Heart right ventricle (tissue), 16 donors: ENCODE measurements at regions of chr14 and their contacts with region 1.

Region 1: GRCh38 chr14:26394150-26394810 is 203.6 kb downstream of the NOVA1 start:
- DNase-seq: no peak
- ATAC-seq: peak in 4 of 8 donors; percentile 49 to 66 (median 56)
- H3K4me3 ChIP-seq: no peak overlapping the region
- H3K27ac ChIP-seq: no peak overlapping the region
- H3K4me1 ChIP-seq: no peaks in the 10 kb centered on the region
- H3K27me3 ChIP-seq: no peaks in the 10 kb centered on the region
- CTCF ChIP-seq: peak in 7 of 9 donors; percentile 30 to 60 (median 49)

Region 2: DNA sequence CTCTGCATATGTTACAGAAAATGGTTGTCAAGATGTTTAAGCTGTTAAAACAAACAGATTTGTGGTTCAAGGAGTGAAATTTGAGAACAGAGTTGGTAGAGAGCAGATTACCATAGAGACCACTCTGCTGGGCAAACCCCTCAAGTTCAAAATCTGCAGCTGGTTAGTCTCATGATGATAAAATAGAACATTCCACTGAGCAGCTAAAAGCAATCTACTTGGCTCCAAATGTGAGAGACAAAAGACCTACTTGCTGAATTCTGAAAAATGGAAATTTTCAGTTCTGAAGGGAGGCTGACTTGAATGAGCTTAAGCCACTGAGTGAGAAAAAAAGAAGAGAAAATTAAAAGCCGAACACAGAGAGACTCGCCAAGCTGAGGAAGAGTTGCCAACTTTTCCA is 315.7 kb before region 1 on chr14:
- intact Hi-C with region 1: no loop called
- DNase-seq: no peak
- ATAC-seq: no peak
- H3K4me3 ChIP-seq: no peak overlapping the region
- H3K27ac ChIP-seq: no peak overlapping the region
- H3K4me1 ChIP-seq: no peaks in the 10 kb centered on the region
- H3K27me3 ChIP-seq: no peaks in the 10 kb centered on the region
- CTCF ChIP-seq: no peak

Region 3: GRCh38 chr14:26454105-26454504 is 59.8 kb after region 1 on chr14:
- intact Hi-C with region 1: no loop called
- DNase-seq: no peak
- ATAC-seq: no peak
- H3K4me3 ChIP-seq: no peak overlapping the region
- H3K27ac ChIP-seq: no peak overlapping the region
- H3K4me1 ChIP-seq: no peaks in the 10 kb centered on the region
- H3K27me3 ChIP-seq: no peaks in the 10 kb centered on the region
- CTCF ChIP-seq: no peak

Region 4: GRCh38 chr14:26598081-26598795 is 204.0 kb after region 1 on chr14:
- intact Hi-C with region 1: loop called in 1 of 10 experiments (anchors 10 kb)
- DNase-seq: peak; percentile 71 to 92
- ATAC-seq: peak; percentile 90 to 96 (median 93)
- H3K4me3 ChIP-seq: peak overlapping the region; percentile 44 to 75 (median 64)
- H3K27ac ChIP-seq: peak overlapping the region; percentile 33 to 88 (median 78)
- H3K4me1 ChIP-seq: peaks cover 0 to 10% (median 0%) of the 10 kb centered on the region in 9 donors
- H3K27me3 ChIP-seq: peaks cover 0 to 44% (median 0%) of the 10 kb centered on the region in 7 donors
- CTCF ChIP-seq: no peak

Region 5: GRCh38 chr14:26984311-26985177 is 590.3 kb after region 1 on chr14:
- intact Hi-C with region 1: loop called in 8 of 10 experiments (anchors 2 to 10 kb)
- DNase-seq: peak in 1 of 2 donors; percentile 63
- ATAC-seq: peak in 5 of 8 donors; percentile 49 to 75 (median 63)
- H3K4me3 ChIP-seq: no peak overlapping the region
- H3K27ac ChIP-seq: no peak overlapping the region
- H3K4me1 ChIP-seq: no peaks in the 10 kb centered on the region
- H3K27me3 ChIP-seq: no peaks in the 10 kb centered on the region
- CTCF ChIP-seq: peak; percentile 30 to 82 (median 66)